ENCODE measurements at regions of chr7 and their contacts with region 1.

Region 1: DNA sequence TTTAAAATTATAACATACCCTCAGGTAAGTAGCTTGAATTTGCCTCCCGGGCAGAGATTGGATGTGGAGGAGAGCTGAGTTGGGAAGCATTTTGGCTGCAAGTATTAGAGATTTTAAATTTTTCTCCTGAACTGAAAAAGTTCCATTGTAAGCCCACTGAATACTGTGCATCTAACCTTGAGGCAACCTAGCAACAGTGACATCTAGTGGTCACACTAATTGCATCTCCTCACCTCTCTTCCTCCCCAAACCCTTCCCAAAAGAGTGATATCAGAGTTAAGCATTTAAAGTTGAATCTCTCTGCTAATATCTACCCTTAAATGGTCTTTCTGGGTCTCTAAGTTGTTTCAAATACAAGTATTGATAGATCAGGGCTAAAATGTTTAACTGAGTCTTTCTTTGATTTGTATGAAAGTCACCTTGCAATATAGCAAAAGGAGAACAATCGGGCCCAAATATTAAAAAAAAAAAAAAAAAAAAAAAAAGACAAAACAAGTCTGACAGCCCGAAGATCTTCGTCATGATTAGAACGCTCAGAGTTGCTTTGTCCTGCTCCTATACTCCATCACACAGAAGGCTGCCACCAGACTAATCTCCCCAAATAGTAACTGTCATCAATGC is 40.4 kb upstream of the DLX5 start:
- DNase-seq: peak; percentile 67
- H3K4me3 Mint-ChIP-seq: no peak overlapping the region
- H3K27ac Mint-ChIP-seq: no peak overlapping the region
- H3K4me1 Mint-ChIP-seq: no peaks in the 10 kb centered on the region
- H3K27me3 Mint-ChIP-seq: peaks cover 50% of the 10 kb centered on the region
- CTCF ChIP-seq: peak; percentile 70

Region 2: GRCh38 chr7:97075928-97076327 is 10.9 kb after region 1 on chr7:
- CTCF ChIA-PET with region 1: interaction called, 38 read pairs
- POLR2A ChIA-PET with region 1: no interaction called
- intact Hi-C with region 1: no loop called
- DNase-seq: peak; percentile 9
- H3K4me3 Mint-ChIP-seq: no peak overlapping the region
- H3K27ac Mint-ChIP-seq: no peak overlapping the region
- H3K4me1 Mint-ChIP-seq: peaks cover 5% of the 10 kb centered on the region
- H3K27me3 Mint-ChIP-seq: peaks cover 46% of the 10 kb centered on the region
- CTCF ChIP-seq: no peak

Region 3: DNA sequence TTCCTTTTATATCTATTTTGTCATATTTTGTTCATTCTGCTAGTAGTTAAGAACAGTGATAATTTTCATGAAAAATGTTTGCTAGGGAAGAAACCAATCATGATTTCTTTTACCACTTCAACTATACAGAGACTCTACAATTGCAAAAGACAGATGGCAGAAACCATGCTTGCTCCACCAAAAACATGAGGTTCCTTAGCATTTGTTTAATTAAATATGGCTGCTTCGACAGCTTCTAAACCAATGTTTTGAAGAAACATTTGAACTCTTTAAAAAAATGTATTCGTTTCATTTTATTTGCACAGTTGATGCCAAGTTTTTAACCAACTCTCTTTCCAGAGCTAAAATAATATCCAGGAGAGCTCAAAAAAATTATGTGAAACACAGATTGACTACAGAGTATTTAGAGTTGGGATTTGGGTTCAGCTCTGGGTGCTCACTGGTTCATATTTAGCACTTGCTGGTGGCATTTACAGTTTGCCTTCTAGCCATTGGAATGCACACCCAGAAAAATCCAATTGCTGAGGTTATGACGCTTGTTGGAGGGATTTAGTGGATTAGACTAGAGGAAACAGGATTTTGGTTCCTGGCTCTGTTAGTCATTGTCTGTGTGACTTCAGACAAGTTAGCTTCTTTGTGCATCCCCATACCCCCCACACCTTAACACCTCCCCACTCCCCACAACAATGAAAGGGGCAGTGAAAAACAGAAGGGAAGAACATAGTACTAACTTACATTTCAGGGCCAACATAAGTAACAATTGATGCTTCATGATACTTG is 16.6 kb after region 1 on chr7:
- CTCF ChIA-PET with region 1: interaction called, 38 read pairs
- POLR2A ChIA-PET with region 1: no interaction called
- intact Hi-C with region 1: no loop called
- DNase-seq: no peak
- H3K4me3 Mint-ChIP-seq: no peak overlapping the region
- H3K27ac Mint-ChIP-seq: no peak overlapping the region
- H3K4me1 Mint-ChIP-seq: peaks cover 5% of the 10 kb centered on the region
- H3K27me3 Mint-ChIP-seq: peaks cover 44% of the 10 kb centered on the region
- CTCF ChIP-seq: no peak